ENCODE measurements at regions of chr7 and their contacts with region 1.

Region 1: GRCh38 chr7:128031901-128032604 is 816 bp upstream of the LRRC4 start:
- DNase-seq: peak in 1 of 2 experiments; percentile 67
- H3K4me3 ChIP-seq: peak overlapping the region; percentile 53 to 74 (median 58)
- H3K27ac ChIP-seq: no peak overlapping the region
- H3K4me1 ChIP-seq: peaks cover 0 to 24% (median 14%) of the 10 kb centered on the region in 4 experiments; a peak in 5 of 7 replicates
- H3K27me3 ChIP-seq: peaks cover 0 to 25% (median 10%) of the 10 kb centered on the region in 4 experiments; a peak in 5 of 7 replicates
- CTCF ChIP-seq: peak in 1 of 3 experiments; percentile 9; a peak in 1 of 4 replicates
- EP300 ChIP-seq: no peak
- POLR2A ChIP-seq: no peak; a peak in 1 of 3 replicates
- RAD21 ChIP-seq: peak in 1 of 2 experiments; percentile 16; a peak in 1 of 4 replicates

Region 2: GRCh38 chr7:128010394-128011127 is 21.5 kb before region 1 on chr7:
- CTCF ChIA-PET with region 1: interaction called, 59 read pairs
- POLR2A ChIA-PET with region 1: interaction called, 3 read pairs
- DNase-seq: no peak
- H3K4me3 ChIP-seq: no peak overlapping the region
- H3K27ac ChIP-seq: no peak overlapping the region
- H3K4me1 ChIP-seq: peaks cover 4 to 10% (median 7%) of the 10 kb centered on the region in 4 experiments
- H3K27me3 ChIP-seq: no peaks in the 10 kb centered on the region
- CTCF ChIP-seq: peak; percentile 19 to 58 (median 39)
- EP300 ChIP-seq: no peak
- POLR2A ChIP-seq: no peak
- RAD21 ChIP-seq: peak; percentile 61 to 65

Region 3: DNA sequence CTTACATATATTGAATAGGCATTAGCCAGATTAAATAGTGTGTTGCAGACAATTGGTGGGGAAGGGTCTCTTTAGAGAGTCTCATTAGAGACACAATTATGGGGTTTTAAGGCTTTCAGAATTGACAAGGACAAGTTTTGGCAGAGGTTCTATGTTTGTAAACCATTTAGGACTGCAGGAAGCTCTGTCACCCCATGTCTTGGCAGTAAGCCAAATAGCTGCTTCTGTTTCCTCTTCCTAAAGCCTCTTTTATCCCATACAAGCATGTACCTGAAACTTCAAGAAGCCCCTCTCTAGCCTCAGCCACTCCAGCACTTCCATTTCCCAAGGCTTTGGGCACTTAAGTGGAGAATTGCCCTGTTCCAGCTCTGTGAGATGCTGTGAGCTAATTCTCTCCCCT is 21.0 kb after region 1 on chr7:
- CTCF ChIA-PET with region 1: interaction called, 113 read pairs
- POLR2A ChIA-PET with region 1: interaction called, 4 read pairs
- DNase-seq: no peak
- H3K4me3 ChIP-seq: no peak overlapping the region
- H3K27ac ChIP-seq: no peak overlapping the region
- H3K4me1 ChIP-seq: no peaks in the 10 kb centered on the region
- H3K27me3 ChIP-seq: no peaks in the 10 kb centered on the region
- CTCF ChIP-seq: no peak
- EP300 ChIP-seq: no peak
- POLR2A ChIP-seq: no peak
- RAD21 ChIP-seq: no peak

Region 4: DNA sequence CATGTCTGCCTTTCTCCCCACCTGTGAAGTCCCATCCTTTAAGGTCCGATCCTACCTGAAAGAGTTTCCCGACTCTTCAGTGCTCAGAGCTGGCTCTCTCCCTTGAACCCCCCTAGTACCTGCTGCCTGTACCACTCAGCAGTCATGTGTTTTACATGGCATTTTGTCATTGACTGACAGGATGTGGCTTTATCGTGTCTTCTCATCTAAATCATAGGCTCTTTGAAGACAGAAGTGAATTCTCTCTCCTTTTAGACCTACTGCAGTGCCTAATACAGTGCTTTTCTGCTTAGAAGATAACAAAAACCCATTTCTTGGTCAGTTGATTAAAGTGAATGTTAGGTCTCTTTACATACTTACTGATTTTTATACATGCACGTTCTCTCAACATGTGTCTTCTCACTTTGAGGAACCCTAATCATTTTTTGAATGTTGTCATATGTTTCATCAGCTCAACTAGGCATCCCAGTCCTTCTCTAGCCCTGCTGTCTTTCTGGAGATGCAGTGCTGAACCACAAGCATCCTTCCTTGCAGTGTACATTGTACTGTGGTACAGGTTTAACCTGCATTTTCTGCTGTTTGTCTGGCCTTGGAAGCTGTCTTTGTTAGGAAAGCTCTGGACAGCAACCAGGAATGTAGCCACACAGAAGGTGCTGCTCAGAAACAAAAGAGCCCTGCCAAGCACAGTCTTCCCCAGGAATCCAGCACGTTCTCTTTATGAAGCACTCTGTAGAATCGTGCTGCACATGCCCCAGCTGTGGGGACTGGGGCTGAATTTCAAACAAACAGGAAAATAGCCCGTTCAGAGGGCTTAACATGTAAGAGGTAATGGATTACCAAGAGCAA is 27.3 kb after region 1 on chr7:
- CTCF ChIA-PET with region 1: interaction called, 113 read pairs
- POLR2A ChIA-PET with region 1: no interaction called
- DNase-seq: no peak
- H3K4me3 ChIP-seq: no peak overlapping the region
- H3K27ac ChIP-seq: no peak overlapping the region
- H3K4me1 ChIP-seq: peaks cover 0 to 8% (median 2%) of the 10 kb centered on the region in 4 experiments; a peak in 1 of 7 replicates
- H3K27me3 ChIP-seq: no peaks in the 10 kb centered on the region
- CTCF ChIP-seq: no peak
- EP300 ChIP-seq: no peak
- POLR2A ChIP-seq: no peak
- RAD21 ChIP-seq: no peak

Region 5: GRCh38 chr7:128066861-128067260 is 34.8 kb after region 1 on chr7:
- CTCF ChIA-PET with region 1: interaction called, 113 read pairs
- POLR2A ChIA-PET with region 1: no interaction called
- DNase-seq: no peak
- H3K4me3 ChIP-seq: no peak overlapping the region
- H3K27ac ChIP-seq: no peak overlapping the region
- H3K4me1 ChIP-seq: peaks cover 0 to 3% (median 0%) of the 10 kb centered on the region in 4 experiments; a peak in 3 of 7 replicates
- H3K27me3 ChIP-seq: no peaks in the 10 kb centered on the region
- CTCF ChIP-seq: peak in 2 of 3 experiments; percentile 21; a peak in 1 of 4 replicates
- EP300 ChIP-seq: no peak
- POLR2A ChIP-seq: no peak
- RAD21 ChIP-seq: peak; percentile 14 to 29; a peak in 3 of 4 replicates

Region 6: GRCh38 chr7:128076796-128077271 is 44.8 kb after region 1 on chr7:
- CTCF ChIA-PET with region 1: interaction called, 12 read pairs
- POLR2A ChIA-PET with region 1: no interaction called
- DNase-seq: no peak
- H3K4me3 ChIP-seq: no peak overlapping the region
- H3K27ac ChIP-seq: no peak overlapping the region
- H3K4me1 ChIP-seq: peaks cover 0 to 8% (median 0%) of the 10 kb centered on the region in 4 experiments; a peak in 3 of 7 replicates
- H3K27me3 ChIP-seq: no peaks in the 10 kb centered on the region
- CTCF ChIP-seq: no peak
- EP300 ChIP-seq: no peak
- POLR2A ChIP-seq: no peak
- RAD21 ChIP-seq: no peak

Region 7: GRCh38 chr7:128104035-128104742 is 72.1 kb after region 1 on chr7:
- CTCF ChIA-PET with region 1: interaction called, 14 read pairs
- POLR2A ChIA-PET with region 1: no interaction called
- DNase-seq: no peak
- H3K4me3 ChIP-seq: peak overlapping the region; percentile 29 to 61 (median 42)
- H3K27ac ChIP-seq: no peak overlapping the region
- H3K4me1 ChIP-seq: no peaks in the 10 kb centered on the region; a peak in 4 of 7 replicates
- H3K27me3 ChIP-seq: peaks cover 13 to 39% (median 28%) of the 10 kb centered on the region in 4 experiments
- CTCF ChIP-seq: no peak
- EP300 ChIP-seq: no peak
- POLR2A ChIP-seq: no peak; a peak in 1 of 3 replicates
- RAD21 ChIP-seq: no peak; a peak in 1 of 4 replicates